Endothelial cell of umbilical vein (primary cell): ENCODE measurements at regions of chr4 and their contacts with region 1.

Region 1: GRCh38 chr4:103204111-103204510 is 6.0 kb upstream of the CENPE start:
- DNase-seq: peak; percentile 21
- H3K4me3 ChIP-seq: no peak overlapping the region
- H3K27ac ChIP-seq: no peak overlapping the region
- H3K4me1 ChIP-seq: no peaks in the 10 kb centered on the region
- H3K27me3 ChIP-seq: peaks cover 0 to 2% of the 10 kb centered on the region in 2 experiments
- CTCF ChIP-seq: peak; percentile 5 to 8
- POLR2A ChIP-seq: no peak

Region 2: DNA sequence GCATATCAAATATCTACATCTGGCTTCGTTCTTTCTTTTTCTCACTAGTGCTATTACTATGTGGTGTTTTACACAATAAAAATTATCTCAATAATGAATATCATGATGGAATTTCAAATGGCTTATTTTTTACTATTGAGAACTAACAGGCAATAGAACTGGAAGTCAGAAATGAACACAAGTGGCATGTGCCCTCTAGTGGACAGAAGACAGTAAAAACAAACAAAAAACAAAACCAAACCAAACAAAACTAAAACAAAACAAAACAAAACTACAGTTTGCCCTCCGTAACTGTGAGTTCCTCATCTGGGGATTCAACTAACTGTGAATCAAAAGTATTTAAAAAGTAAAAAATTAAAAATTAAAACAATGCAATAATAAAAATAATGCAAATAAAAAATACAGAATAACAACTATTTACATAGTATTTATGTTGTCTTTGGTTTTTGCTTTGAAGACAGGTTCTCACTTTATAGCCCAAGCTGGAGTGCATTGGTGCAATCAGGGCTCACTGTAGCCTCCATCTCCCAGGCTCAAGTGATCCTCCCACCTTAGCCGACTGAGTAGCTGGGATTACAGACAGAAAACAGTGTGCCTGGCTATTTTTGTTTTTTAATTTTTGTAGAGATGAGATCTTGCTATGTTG is 711.2 kb after region 1 on chr4:
- CTCF ChIA-PET with region 1: interaction called, 31 read pairs
- POLR2A ChIA-PET with region 1: no interaction called
- dilution Hi-C with region 1: no loop called
- intact Hi-C with region 1: loop called (anchors 5 kb)
- DNase-seq: peak; percentile 3
- H3K4me3 ChIP-seq: no peak overlapping the region
- H3K27ac ChIP-seq: no peak overlapping the region
- H3K4me1 ChIP-seq: no peaks in the 10 kb centered on the region
- H3K27me3 ChIP-seq: no peaks in the 10 kb centered on the region
- CTCF ChIP-seq: peak; percentile 34 to 56
- POLR2A ChIP-seq: no peak

Region 3: GRCh38 chr4:103934178-103934789 is 730.2 kb after region 1 on chr4:
- CTCF ChIA-PET with region 1: no interaction called
- POLR2A ChIA-PET with region 1: no interaction called
- dilution Hi-C with region 1: no loop called
- intact Hi-C with region 1: loop called (anchors 2 kb)
- DNase-seq: peak; percentile 43
- H3K4me3 ChIP-seq: no peak overlapping the region
- H3K27ac ChIP-seq: no peak overlapping the region
- H3K4me1 ChIP-seq: no peaks in the 10 kb centered on the region
- H3K27me3 ChIP-seq: no peaks in the 10 kb centered on the region
- CTCF ChIP-seq: peak; percentile 37 to 42
- POLR2A ChIP-seq: no peak